Activated CD8-positive, alpha-beta T cell treated with anti-CD3 and anti-CD28 coated beads, Interleukin-2, amount 10 ng/mL, durations not matched to agents 7 days and 5 days (primary cell): ENCODE measurements at regions of chr12 and their contacts with region 1.

Region 1: GRCh38 chr12:91382081-91382543 is 199.5 kb upstream of the DCN start:
- DNase-seq: peak; percentile 87
- ATAC-seq: peak; percentile 88
- H3K4me3 Mint-ChIP-seq: peak overlapping the region; percentile 66
- H3K27ac Mint-ChIP-seq: no peak overlapping the region
- H3K4me1 Mint-ChIP-seq: peaks cover 9% of the 10 kb centered on the region
- H3K27me3 Mint-ChIP-seq: peaks cover 10% of the 10 kb centered on the region

Region 2: GRCh38 chr12:91343010-91343409 is 39.1 kb before region 1 on chr12:
- CTCF ChIA-PET with region 1: no interaction called
- POLR2A ChIA-PET with region 1: no interaction called
- DNase-seq: no peak
- ATAC-seq: no peak
- H3K4me3 Mint-ChIP-seq: no peak overlapping the region
- H3K27ac Mint-ChIP-seq: no peak overlapping the region
- H3K4me1 Mint-ChIP-seq: no peaks in the 10 kb centered on the region
- H3K27me3 Mint-ChIP-seq: peaks cover 11% of the 10 kb centered on the region

Region 3: GRCh38 chr12:91355150-91356006 is 26.7 kb before region 1 on chr12:
- CTCF ChIA-PET with region 1: interaction called, 10 read pairs
- POLR2A ChIA-PET with region 1: no interaction called
- DNase-seq: peak; percentile 61
- ATAC-seq: peak; percentile 85
- H3K4me3 Mint-ChIP-seq: no peak overlapping the region
- H3K27ac Mint-ChIP-seq: no peak overlapping the region
- H3K4me1 Mint-ChIP-seq: no peaks in the 10 kb centered on the region
- H3K27me3 Mint-ChIP-seq: peaks cover 14% of the 10 kb centered on the region

Region 4: DNA sequence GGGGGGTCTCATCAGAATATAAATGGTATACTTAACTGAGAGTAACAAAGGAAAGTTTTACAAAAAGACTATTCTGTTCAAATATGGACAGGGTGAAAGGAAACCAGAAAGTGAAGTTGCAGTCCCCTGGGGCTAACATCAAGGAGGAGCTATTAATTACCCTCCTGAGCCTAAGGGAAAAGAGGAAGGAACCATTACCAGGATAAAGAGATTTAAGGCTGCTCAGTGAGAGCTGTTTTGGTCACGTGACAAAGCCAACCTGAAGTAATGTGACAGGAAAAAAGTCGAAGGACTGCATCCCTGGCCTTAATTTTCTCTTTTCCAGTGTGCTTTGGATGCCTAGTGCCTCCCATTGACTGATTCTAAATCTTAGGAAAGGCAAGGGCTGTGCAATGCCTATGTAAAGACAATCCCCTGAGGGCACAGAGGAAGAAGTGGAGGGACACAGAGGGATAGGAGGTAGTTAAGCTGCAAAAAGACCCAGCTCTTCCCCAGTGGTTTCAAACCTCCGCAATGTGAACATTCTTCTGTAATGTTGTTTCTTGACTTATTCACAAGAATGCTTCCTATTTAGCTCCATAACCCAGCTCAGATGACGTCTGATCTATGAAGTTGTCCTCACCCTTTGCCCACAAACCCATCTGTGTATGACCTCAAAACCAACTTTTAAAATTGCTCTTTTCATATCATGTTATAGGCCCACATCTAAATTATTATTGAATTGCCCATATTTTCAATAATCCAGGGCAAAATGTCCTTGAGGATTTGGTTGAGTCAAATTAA is 11.8 kb before region 1 on chr12:
- CTCF ChIA-PET with region 1: interaction called, 22 read pairs
- POLR2A ChIA-PET with region 1: no interaction called
- DNase-seq: no peak
- ATAC-seq: no peak
- H3K4me3 Mint-ChIP-seq: no peak overlapping the region
- H3K27ac Mint-ChIP-seq: no peak overlapping the region
- H3K4me1 Mint-ChIP-seq: peaks cover 3% of the 10 kb centered on the region
- H3K27me3 Mint-ChIP-seq: no peaks in the 10 kb centered on the region

Region 5: DNA sequence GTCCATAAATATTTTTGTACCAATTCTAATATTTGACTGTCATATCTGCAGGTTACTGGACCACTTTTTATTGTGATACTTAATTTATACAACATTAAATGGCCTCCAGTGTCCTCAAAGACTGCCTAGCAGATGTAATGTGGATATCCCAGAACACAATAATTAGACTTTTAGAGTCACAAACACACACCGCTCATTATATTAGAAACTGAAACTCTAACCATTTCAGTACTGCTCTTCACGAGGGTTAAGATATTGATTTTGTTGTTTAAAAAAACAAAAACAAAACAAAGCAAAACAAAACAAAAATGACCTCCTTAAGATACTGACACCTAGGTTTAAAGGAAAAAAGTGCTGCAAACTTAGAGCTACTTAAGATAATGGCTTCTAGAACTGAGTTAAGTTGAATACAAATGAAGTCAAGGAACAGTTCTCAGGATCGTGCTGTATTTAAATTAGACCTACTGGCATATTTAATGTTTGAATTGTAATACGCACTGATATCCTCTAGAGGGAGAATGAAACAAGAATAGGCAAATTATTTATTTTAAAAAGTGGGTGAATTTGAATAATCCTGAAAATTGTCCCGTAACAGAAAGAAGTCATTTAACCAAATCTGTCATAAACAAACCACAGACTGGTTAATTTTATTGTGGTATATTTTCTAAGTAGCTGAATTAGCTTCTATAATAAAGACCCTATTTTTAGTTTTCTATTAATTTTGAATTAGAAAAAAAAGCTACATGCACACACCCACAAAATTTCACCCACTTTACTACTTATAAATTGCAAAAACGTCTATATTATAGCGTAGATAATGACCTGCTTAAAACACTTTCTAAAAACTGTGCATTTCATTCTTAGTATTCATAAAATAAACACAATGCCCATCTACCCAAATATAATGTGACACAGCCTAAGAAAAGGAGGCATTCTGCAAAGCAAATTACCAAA is 195.8 kb after region 1 on chr12:
- CTCF ChIA-PET with region 1: interaction called, 15 read pairs
- POLR2A ChIA-PET with region 1: no interaction called
- DNase-seq: no peak
- ATAC-seq: peak; percentile 47
- H3K4me3 Mint-ChIP-seq: peak overlapping the region; percentile 70
- H3K27ac Mint-ChIP-seq: peak overlapping the region; percentile 63
- H3K4me1 Mint-ChIP-seq: peaks cover 9% of the 10 kb centered on the region
- H3K27me3 Mint-ChIP-seq: no peaks in the 10 kb centered on the region

Region 6: GRCh38 chr12:92136965-92137721 is 755.0 kb after region 1 on chr12:
- CTCF ChIA-PET with region 1: interaction called, 13 read pairs
- POLR2A ChIA-PET with region 1: no interaction called
- DNase-seq: no peak
- ATAC-seq: no peak
- H3K4me3 Mint-ChIP-seq: peak overlapping the region; percentile 100
- H3K27ac Mint-ChIP-seq: peak overlapping the region; percentile 86
- H3K4me1 Mint-ChIP-seq: peaks cover 71% of the 10 kb centered on the region
- H3K27me3 Mint-ChIP-seq: no peaks in the 10 kb centered on the region

Region 7: GRCh38 chr12:92570056-92570753 is 1188.1 kb after region 1 on chr12:
- CTCF ChIA-PET with region 1: interaction called, 50 read pairs
- POLR2A ChIA-PET with region 1: no interaction called
- DNase-seq: peak; percentile 71
- ATAC-seq: peak; percentile 85
- H3K4me3 Mint-ChIP-seq: no peak overlapping the region
- H3K27ac Mint-ChIP-seq: no peak overlapping the region
- H3K4me1 Mint-ChIP-seq: peaks cover 12% of the 10 kb centered on the region
- H3K27me3 Mint-ChIP-seq: no peaks in the 10 kb centered on the region